ENCODE measurements at regions of chr14 and their contacts with region 1.

Region 1: DNA sequence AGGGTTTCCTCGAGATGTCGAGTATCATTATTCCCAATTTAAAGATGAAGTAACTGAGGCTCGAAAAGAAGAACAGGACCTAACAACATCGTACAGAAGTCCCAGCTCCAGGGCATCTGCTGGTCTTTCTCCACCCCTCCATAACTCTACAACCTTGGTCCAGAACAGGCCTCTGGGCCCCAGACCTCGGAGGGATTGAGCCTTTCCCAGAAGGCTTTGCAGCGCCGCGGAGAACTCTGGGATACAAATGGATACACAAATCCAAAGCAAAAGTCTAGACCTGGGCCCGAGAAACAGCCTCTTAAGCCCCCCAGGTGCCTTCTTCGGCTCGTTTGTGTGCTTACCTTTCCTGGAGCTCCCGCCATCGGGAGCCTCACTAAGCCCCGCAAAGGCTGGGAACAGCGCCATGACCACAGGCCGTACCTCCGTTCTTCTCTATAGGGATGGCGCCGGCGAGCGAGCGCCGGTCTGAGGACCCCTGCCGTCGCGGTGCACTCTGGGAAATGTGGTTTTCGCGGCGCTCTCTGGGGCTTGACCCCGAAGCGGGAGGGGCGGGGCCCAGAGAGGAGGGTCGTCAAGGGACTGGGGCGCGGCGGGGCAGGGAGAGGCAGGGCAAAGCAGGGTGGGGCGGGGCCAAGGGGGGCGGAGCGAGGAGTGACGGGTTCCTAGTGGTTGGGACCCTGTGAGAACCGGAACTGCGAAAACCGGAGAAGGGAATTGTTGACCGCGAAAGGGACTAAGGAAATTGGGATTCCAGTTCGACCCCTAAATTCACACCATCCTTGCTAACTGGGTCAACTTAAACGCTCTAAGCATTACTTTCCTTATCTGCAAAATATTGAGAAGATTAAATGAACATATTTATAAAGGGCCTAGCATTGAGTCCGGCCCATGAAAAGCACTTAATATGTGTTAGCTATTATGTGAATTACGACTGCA is at the start of gene NRDE2:
- DNase-seq: peak; percentile 100
- ATAC-seq: peak; percentile 100
- total RNA-seq, gene NRDE2: 12.0 to 13.1 TPM

Region 2: DNA sequence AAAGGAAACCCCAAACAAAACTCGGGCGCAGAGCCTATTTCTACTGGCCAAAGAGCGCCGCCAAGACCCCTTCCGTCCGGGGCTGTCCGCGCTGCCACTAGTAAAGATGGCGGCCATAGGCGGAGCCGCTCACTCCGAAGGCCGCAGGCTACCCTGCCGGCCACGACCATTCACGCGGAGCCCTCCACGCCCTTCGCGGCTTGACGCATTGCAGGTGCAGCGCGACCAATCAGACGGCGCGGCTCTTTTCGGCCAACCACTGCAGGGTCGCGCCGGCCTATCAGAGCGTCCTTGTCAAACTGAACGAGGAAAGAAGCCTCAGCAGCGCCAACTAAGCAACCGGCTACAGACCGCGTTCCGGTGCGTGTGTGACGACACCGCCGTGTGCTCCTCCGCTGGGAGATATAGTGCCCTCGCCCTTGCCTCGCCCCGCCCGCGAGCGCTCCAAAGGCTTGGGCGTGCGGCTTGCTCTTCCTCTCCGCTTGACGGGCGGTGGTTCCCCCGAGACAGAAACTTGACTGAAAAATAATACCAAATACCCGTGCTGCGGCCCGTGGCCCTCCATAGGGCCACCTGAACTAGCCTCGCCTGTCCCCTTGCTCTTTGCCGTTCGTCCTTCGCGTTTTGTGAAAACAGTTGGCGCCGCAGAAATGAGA is 51.4 kb after region 1 on chr14:
- intact Hi-C with region 1: loop called in 1 of 2 experiments (anchors 5 kb)
- DNase-seq: peak; percentile 100
- ATAC-seq: peak; percentile 93 to 96